ENCODE measurements at regions of chr19 and their contacts with region 1.

Region 1: DNA sequence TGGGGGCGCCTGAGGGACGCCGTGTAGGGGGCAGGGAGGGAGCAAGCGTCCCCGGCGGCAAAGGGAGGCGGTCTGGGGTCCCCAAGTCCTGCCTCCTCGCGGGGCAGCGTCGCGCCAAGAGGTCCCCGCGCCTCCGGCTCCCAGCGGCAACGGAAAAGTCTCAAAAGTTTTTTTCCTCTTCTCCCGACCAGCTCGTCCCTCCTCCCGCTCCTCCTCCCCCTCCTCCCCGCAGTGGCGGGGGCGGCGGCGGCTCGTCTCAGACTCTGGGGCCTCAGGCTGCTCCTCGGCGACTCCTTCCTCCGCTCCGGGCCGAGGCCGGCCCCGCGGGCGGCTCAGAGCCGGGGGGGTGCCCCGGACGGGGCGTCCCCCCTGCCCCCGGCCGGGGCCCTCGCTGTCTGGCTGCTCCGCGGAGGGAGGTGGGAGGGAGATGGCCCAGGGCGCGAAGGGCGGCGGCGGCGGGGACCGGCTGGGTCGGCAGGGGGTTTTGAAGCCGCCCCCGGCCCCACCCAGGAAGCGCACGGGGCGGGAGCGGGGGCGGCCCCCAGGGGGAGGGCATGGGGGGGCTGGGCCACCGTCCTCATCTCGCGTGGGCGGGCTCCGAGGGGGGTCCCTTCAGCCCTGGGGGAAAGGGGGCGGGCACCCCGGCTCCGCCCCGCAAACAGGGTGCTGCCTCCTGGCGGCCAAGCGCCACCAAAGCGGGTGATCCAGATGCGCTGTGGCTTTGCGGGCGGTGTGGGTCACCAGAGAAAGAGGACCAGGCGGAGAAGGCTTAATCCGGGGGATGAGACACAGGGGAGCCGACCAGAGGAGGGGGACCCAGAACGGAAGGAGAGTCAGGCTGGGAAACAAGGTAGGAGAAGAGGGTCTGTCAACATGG is at the start of gene TGFB1:
- DNase-seq: peak; percentile 93 to 97 (median 95)
- H3K4me3 ChIP-seq: peak within 1 kb of the TSS; percentile 97
- H3K4me3 Mint-ChIP-seq: peak within 1 kb of the TSS; percentile 93 to 100 (median 100)
- H3K27ac ChIP-seq: peak within 1 kb of the TSS; percentile 95
- H3K27ac Mint-ChIP-seq: peak within 1 kb of the TSS; percentile 93 to 100 (median 99)
- H3K4me1 ChIP-seq: peaks cover 70% of the 10 kb centered on the region
- H3K4me1 Mint-ChIP-seq: peaks cover 55 to 67% (median 65%) of the 10 kb centered on the region in 3 donors
- H3K27me3 ChIP-seq: no peaks in the 10 kb centered on the region
- H3K27me3 Mint-ChIP-seq: peaks cover 0 to 12% of the 10 kb centered on the region in 2 donors
- total RNA-seq, gene TGFB1: 152 to 161 TPM

Region 2: DNA sequence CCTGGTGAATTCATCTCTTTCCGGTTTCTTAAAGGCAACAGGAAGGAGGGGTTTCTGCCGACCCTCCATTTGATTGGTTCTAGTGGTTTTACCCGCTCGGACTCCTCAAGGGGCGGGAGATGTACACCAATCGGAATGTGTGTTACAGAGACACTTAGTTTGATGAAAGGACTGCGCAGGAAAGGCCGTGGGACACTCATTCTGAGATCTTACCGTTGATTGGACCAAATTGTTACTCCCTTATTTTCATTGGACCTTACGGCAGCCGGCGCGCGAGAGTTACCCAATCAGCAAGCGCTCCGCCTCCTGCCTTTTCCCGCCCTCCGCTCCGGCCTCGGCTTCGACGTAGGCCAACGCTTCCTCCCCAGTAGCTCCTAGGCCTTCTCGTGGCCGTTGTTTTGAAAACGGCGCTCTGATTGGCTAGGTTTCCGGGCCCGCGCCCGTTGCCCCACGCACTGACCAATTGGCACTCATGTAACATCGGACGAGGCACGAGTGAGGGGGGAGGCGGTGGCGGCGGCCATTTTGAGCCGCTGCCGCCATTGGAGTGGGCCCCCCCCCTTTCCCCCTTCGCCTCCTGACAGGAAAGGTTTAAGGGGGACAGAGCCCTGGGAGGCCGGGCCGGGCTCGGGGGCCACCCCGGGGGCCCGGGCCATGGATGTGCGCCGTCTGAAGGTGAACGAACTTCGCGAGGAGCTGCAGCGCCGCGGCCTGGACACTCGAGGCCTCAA is 89.7 kb before region 1 on chr19 and contains the start of gene HNRNPUL1:
- CTCF ChIA-PET with region 1: interaction called, 23 read pairs
- POLR2A ChIA-PET with region 1: interaction called, 41 read pairs
- DNase-seq: peak; percentile 98 to 100 (median 100)
- H3K4me3 ChIP-seq: peak within 1 kb of the TSS; percentile 82
- H3K4me3 Mint-ChIP-seq: peak within 1 kb of the TSS; percentile 91 to 99 (median 97)
- H3K27ac ChIP-seq: peak within 1 kb of the TSS; percentile 100
- H3K27ac Mint-ChIP-seq: peak within 1 kb of the TSS; percentile 99 to 100 (median 100)
- H3K4me1 ChIP-seq: peaks cover 34% of the 10 kb centered on the region
- H3K4me1 Mint-ChIP-seq: peaks cover 37 to 57% (median 47%) of the 10 kb centered on the region in 3 donors
- H3K27me3 ChIP-seq: no peaks in the 10 kb centered on the region
- H3K27me3 Mint-ChIP-seq: peaks cover 0 to 19% of the 10 kb centered on the region in 2 donors
- total RNA-seq, gene HNRNPUL1: 270 to 279 TPM

Region 3: DNA sequence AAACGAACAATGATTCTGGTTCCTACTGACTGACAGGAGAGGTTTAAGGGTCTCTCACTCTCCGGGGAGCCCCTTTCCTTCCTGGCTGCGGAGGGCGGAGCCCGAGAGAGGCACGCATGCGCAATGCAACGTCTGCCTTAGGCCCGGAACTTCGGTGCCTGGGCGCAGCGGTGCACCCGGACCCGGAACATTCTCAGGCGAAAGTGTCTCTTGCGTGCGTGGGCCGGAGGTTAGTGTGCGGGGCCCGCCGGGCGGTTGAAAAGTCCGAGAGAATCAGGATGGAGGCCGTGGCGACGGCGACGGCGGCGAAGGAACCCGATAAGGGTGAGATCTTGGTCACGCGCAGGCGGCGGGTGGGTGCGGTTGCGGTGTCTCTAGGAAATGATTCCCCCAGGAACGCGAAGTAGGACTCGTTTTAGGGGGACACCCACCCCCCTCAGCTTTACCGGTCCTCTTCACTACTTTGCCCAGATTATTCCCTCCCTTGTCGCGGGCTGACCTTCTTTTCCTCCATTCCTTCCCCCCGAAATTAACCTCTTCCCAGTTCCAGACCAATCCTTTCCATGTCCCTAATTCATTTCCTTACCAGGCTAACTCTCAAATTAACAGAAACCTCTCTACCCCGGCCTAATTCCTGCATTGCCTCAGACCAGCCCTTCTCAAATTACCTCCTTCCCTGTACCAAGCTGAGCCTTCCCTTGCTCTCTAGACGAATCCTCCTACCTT is 43.5 kb before region 1 on chr19 and contains the start of gene CCDC97:
- CTCF ChIA-PET with region 1: interaction called, 54 read pairs
- POLR2A ChIA-PET with region 1: interaction called, 37 read pairs
- DNase-seq: peak; percentile 81 to 94 (median 89)
- H3K4me3 ChIP-seq: peak within 1 kb of the TSS; percentile 93
- H3K4me3 Mint-ChIP-seq: peak within 1 kb of the TSS; percentile 94 to 100 (median 98)
- H3K27ac ChIP-seq: peak within 1 kb of the TSS; percentile 90
- H3K27ac Mint-ChIP-seq: peak within 1 kb of the TSS; percentile 93 to 100 (median 98)
- H3K4me1 ChIP-seq: peaks cover 60% of the 10 kb centered on the region
- H3K4me1 Mint-ChIP-seq: peaks cover 68 to 93% (median 87%) of the 10 kb centered on the region in 3 donors
- H3K27me3 ChIP-seq: no peaks in the 10 kb centered on the region
- H3K27me3 Mint-ChIP-seq: peaks cover 0 to 8% of the 10 kb centered on the region in 2 donors
- total RNA-seq, gene CCDC97: 31.7 to 32.1 TPM

Region 4: DNA sequence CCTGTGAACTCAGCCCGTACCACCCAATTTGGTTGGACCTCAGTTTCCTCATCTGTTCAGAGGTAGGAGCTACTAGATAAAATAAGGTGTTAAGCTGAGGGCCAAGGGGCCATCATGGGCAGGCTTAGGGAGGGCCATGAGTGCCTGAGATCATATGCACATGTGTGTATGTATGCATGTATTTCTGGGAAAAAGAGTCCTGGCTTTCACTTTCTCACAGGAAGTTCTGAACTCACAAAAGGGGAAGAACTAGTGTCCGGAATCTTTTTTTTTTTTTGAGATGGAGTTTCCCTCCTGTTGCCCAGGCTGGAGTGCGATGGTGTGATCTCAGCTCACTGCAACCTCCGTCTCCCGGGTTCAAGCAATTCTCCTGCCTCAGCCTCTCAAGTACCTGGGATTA is 18.9 kb before region 1 on chr19:
- CTCF ChIA-PET with region 1: interaction called, 33 read pairs
- POLR2A ChIA-PET with region 1: interaction called, 3 read pairs
- DNase-seq: no peak
- H3K4me3 ChIP-seq: no peak overlapping the region
- H3K4me3 Mint-ChIP-seq: peak overlapping the region in 2 of 7 donors; percentile 32 to 58
- H3K27ac ChIP-seq: no peak overlapping the region
- H3K27ac Mint-ChIP-seq: peak overlapping the region in 6 of 8 donors; percentile 21 to 100 (median 58)
- H3K4me1 ChIP-seq: peaks cover 22% of the 10 kb centered on the region
- H3K4me1 Mint-ChIP-seq: peaks cover 40 to 60% (median 50%) of the 10 kb centered on the region in 3 donors
- H3K27me3 ChIP-seq: no peaks in the 10 kb centered on the region
- H3K27me3 Mint-ChIP-seq: peaks cover 0 to 2% of the 10 kb centered on the region in 2 donors

Region 5: GRCh38 chr19:41439441-41440222 is 85.9 kb after region 1 on chr19 and contains the start of gene DMAC2:
- CTCF ChIA-PET with region 1: interaction called, 10 read pairs
- POLR2A ChIA-PET with region 1: no interaction called
- DNase-seq: peak; percentile 87 to 95 (median 88)
- H3K4me3 ChIP-seq: peak within 1 kb of the TSS; percentile 100
- H3K4me3 Mint-ChIP-seq: peak within 1 kb of the TSS in 3 of 7 donors; percentile 19 to 81 (median 56)
- H3K27ac ChIP-seq: peak within 1 kb of the TSS; percentile 87
- H3K27ac Mint-ChIP-seq: peak within 1 kb of the TSS in 5 of 8 donors; percentile 3 to 69 (median 10)
- H3K4me1 ChIP-seq: peaks cover 17% of the 10 kb centered on the region
- H3K4me1 Mint-ChIP-seq: peaks cover under 1 to 11% (median 10%) of the 10 kb centered on the region in 3 donors
- H3K27me3 ChIP-seq: no peaks in the 10 kb centered on the region
- H3K27me3 Mint-ChIP-seq: peaks cover 8 to 14% of the 10 kb centered on the region in 2 donors
- total RNA-seq, gene DMAC2: 74.1 to 76.2 TPM